ENCODE measurements at regions of chr4 and their contacts with region 1.

Region 1: DNA sequence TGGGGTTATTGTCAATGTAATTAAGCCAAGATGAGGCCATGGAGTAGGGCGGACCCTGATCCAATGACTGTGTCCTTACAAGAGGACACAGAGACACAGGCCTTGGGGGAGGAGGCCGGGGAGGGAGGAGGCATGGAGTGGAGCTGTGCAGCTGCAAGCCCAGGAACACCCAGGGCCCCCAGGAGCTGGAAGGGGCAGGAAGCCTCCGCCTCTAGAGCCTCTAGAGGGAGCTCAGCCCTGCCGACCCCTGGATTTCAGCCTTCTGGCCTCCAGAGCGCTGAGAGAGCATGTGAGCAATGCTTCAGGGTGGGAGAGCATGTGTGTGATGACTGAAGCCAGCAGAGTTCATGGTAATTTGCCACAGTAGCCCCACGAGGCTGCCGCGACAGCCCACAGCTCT is 234.6 kb downstream of the AFAP1 start:
- DNase-seq: peak in 1 of 2 donors; percentile 26
- H3K4me3 ChIP-seq: no peak overlapping the region
- H3K27ac ChIP-seq: peak overlapping the region in 1 of 2 donors; percentile 32
- H3K4me1 ChIP-seq: no peaks in the 10 kb centered on the region
- H3K27me3 ChIP-seq: no peaks in the 10 kb centered on the region
- CTCF ChIP-seq: no peak
- POLR2A ChIP-seq: no peak

Region 2: DNA sequence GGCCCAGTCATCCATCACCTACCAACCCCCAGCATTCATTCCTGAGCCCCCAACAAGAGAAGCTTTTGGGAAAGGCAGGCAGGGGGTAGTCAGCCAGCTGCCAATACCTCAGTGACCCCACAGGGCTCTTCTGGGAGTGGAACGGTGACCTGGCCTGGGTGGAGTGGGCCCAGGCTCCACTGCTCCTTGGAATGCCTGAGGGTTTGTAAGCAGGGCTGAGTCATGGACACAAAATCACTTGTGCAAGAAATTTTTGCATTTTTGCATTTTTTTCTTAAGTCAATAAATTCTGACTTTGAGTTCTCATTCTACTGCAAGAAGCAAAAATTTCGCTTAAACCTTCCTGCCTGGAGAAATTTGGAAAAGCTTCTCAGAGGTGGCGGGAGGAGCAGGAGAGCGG is 494.2 kb before region 1 on chr4:
- intact Hi-C with region 1: loop called (anchors 5 kb)
- DNase-seq: no peak
- H3K4me3 ChIP-seq: no peak overlapping the region
- H3K27ac ChIP-seq: no peak overlapping the region
- H3K4me1 ChIP-seq: peaks cover 5 to 15% of the 10 kb centered on the region in 2 donors
- H3K27me3 ChIP-seq: peaks cover 0 to 4% of the 10 kb centered on the region in 2 donors
- CTCF ChIP-seq: no peak
- POLR2A ChIP-seq: no peak